Mucosa of descending colon (tissue), 3 donors: ENCODE measurements at regions of chr2 and their contacts with region 1.

Region 1: DNA sequence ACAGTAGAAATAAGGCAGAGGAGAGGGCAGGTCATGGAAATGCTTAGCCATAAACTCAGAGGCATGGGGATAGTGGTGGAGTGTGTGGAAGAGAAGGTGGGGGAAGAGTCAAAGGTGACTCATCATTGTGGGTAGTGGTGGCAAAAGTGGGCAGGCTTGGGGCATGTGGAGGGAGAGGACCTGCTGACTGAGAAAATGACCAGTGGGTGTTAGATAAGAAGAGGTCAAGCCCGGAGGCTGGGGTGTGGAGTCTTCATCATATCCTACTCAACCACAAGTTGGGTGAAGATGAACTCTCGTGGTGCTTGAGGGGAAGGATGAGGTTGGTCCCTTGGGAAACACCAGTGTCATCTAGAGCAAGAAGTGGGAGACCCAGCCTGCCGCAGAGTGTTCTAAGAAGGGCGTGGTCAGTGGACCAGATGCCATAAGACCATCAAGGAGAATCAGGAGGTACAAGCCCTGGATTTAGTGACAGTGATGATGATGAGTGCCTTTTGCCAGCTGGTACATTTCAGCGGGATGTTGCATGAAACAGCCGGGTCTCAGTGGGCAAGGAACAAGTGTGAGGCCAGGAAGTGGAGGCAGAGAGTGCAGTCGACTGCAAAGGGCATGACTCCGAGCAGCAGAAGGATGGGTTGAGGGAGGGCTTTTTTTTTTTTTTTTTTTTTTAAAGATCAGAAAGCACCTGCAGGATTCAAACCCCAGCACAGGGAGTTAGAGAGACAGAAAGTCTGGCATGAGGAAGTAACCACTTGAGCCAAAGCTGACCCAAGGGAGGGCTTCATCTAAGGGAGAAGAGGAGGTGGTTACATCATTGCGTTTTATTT is 122.6 kb upstream of the SPRED2 start:
- DNase-seq: no peak
- ATAC-seq: no peak
- H3K4me3 ChIP-seq: no peak overlapping the region
- H3K4me1 ChIP-seq: no peaks in the 10 kb centered on the region
- CTCF ChIP-seq: no peak

Region 2: DNA sequence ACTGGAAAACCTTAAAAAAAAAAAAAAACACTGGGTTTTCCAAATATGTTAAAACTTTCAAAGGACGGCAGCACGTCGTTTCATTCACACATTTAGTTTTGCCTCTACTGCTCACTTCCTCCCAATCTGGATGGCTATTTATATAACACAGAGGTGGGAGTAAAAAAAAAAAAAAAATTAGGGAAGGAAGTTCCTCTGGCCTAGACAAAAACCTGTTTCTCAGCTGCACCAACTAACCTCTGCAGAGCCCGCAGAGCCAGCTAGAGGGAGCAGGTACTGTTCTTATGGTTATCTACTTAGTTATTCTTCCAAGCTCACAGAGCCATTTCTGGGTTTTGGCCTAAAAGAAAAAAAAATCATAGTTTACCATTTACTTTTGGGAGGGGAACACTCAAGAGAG is 537.6 kb before region 1 on chr2:
- intact Hi-C with region 1: no loop called
- DNase-seq: peak in 1 of 3 donors; percentile 56
- ATAC-seq: peak; percentile 62
- H3K4me3 ChIP-seq: no peak overlapping the region
- H3K4me1 ChIP-seq: no peaks in the 10 kb centered on the region
- CTCF ChIP-seq: peak; percentile 17

Region 3: GRCh38 chr2:65264821-65265670 is 289.9 kb before region 1 on chr2:
- intact Hi-C with region 1: loop called in 1 of 2 experiments (anchors 2 kb)
- DNase-seq: peak in 1 of 3 donors; percentile 74
- ATAC-seq: peak; percentile 88
- H3K4me3 ChIP-seq: no peak overlapping the region
- H3K4me1 ChIP-seq: peaks cover 6% of the 10 kb centered on the region
- CTCF ChIP-seq: peak; percentile 22

Region 4: DNA sequence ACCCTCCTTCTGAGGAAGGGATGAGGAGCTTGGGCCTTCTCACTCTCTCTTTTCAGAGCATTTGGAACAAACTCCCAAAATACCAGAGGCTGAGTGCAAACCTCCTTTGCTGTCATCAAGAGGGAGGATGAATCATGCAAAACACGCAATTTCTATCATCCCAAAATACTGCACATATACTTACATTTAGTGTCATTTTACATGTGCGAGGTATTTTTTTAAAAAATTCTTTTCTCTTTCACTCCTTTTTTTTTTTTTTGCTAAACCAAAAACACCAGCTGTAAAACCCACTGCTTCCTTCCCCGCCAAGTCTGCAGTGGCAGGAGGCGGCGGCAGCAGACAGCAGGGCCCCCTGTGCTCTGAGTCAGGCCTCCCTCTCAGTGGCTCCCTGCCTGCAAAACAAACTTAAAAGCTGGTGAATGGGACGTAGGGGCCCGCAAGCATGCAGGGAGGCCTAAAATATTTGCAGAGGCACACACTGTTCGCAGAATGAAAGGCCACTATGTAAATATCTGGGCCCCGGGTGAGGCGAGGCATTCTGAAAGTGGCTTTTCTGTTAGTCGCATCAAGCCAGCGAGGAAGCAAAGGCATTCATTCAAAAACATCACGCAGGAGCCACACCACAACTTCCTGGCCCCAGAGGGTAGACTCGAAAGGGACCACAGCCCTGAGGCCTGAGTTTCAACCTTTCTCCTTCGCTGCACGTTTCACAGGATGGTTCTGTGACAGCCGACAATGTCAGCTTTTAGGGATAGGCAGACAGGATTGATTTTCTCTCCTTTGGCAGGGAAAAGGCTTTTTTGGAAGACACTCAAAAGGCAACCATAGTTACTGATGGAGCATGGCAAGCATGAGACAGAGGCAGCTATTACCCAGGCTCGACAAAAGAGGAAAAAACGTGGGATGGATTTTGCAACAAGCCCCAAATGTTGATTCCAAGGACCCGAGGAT is 253.9 kb before region 1 on chr2:
- intact Hi-C with region 1: no loop called
- DNase-seq: peak; percentile 40 to 65 (median 43)
- ATAC-seq: peak; percentile 70
- H3K4me3 ChIP-seq: no peak overlapping the region
- H3K4me1 ChIP-seq: peaks cover 9% of the 10 kb centered on the region
- CTCF ChIP-seq: no peak